ENCODE measurements at regions of chr3 and their contacts with region 1.

Region 1: GRCh38 chr3:45938864-45939263 is 4.4 kb upstream of the CXCR6 start:
- DNase-seq: peak; percentile 82
- H3K4me3 Mint-ChIP-seq: no peak overlapping the region
- H3K27ac Mint-ChIP-seq: no peak overlapping the region
- H3K4me1 Mint-ChIP-seq: peaks cover 6% of the 10 kb centered on the region
- H3K27me3 Mint-ChIP-seq: no peaks in the 10 kb centered on the region
- CTCF ChIP-seq: peak; percentile 79

Region 2: GRCh38 chr3:45037734-45038455 is 901.0 kb before region 1 on chr3:
- CTCF ChIA-PET with region 1: interaction called, 3 read pairs
- POLR2A ChIA-PET with region 1: no interaction called
- intact Hi-C with region 1: loop called (anchors 5 kb)
- DNase-seq: peak; percentile 97
- H3K4me3 Mint-ChIP-seq: no peak overlapping the region
- H3K27ac Mint-ChIP-seq: no peak overlapping the region
- H3K4me1 Mint-ChIP-seq: peaks cover 4% of the 10 kb centered on the region
- H3K27me3 Mint-ChIP-seq: no peaks in the 10 kb centered on the region
- CTCF ChIP-seq: peak; percentile 82

Region 3: GRCh38 chr3:45950686-45951600 is 12.1 kb after region 1 on chr3:
- CTCF ChIA-PET with region 1: interaction called, 13 read pairs
- POLR2A ChIA-PET with region 1: interaction called, 4 read pairs
- intact Hi-C with region 1: no loop called
- DNase-seq: no peak
- H3K4me3 Mint-ChIP-seq: no peak overlapping the region
- H3K27ac Mint-ChIP-seq: no peak overlapping the region
- H3K4me1 Mint-ChIP-seq: no peaks in the 10 kb centered on the region
- H3K27me3 Mint-ChIP-seq: no peaks in the 10 kb centered on the region
- CTCF ChIP-seq: no peak

Region 4: GRCh38 chr3:45972534-45973402 is 33.9 kb after region 1 on chr3:
- CTCF ChIA-PET with region 1: interaction called, 35 read pairs
- POLR2A ChIA-PET with region 1: no interaction called
- intact Hi-C with region 1: no loop called
- DNase-seq: peak; percentile 89
- H3K4me3 Mint-ChIP-seq: no peak overlapping the region
- H3K27ac Mint-ChIP-seq: peak overlapping the region; percentile 75
- H3K4me1 Mint-ChIP-seq: peaks cover 10% of the 10 kb centered on the region
- H3K27me3 Mint-ChIP-seq: no peaks in the 10 kb centered on the region
- CTCF ChIP-seq: no peak

Region 5: DNA sequence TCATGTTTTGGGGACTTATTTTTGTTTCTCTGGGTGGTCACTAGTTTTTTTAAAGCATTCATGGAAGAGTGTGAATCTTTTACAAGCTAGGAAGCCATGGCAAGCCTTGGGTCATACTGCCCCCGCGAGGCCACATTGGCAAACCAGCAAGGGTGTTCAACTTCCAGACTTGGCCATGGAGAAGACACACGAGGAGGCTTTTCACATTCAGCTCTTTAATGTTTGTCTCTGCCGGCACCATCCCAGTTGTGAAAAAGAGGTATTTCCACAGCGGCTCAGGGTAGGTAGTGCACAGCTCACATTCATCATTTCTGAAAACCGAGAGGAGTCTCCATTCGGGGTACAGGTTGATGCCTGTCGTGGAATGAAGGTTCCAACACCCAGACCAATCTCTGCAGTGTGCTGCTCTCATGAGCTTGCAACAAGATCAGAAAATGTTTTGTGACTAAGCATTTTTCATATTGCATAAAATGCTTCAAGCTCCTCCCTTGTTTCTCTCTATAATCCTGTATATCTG is 439.6 kb after region 1 on chr3:
- CTCF ChIA-PET with region 1: interaction called, 33 read pairs
- POLR2A ChIA-PET with region 1: interaction called, 6 read pairs
- intact Hi-C with region 1: loop called (anchors 2 kb)
- DNase-seq: peak; percentile 73
- H3K4me3 Mint-ChIP-seq: no peak overlapping the region
- H3K27ac Mint-ChIP-seq: peak overlapping the region; percentile 4
- H3K4me1 Mint-ChIP-seq: peaks cover 16% of the 10 kb centered on the region
- H3K27me3 Mint-ChIP-seq: peaks cover 33% of the 10 kb centered on the region
- CTCF ChIP-seq: peak; percentile 73

Region 6: DNA sequence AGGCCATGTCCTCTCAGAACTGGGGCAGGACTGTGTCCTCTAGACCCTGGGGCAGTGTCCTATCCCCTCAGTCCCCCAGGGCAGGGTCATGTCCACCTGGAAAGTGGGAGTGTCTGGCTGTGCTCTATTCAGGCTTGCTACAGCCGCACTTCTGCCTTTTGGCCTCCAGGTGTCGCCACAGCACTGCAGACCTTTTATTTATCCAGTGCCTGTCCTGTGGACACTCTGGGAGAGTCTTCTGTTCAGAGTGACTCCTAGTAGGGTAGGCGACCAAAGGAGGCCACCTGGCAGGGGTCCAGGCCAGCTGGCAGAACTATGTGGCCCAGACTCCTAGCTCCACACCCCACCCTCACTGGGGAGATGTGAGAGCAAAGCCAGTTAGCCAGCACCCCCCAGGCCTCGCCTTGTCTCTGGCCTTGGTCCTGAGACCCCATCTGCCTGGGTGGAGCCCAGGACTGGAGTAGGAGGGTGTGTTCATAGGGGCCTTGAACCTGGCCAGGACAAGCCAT is 766.2 kb after region 1 on chr3:
- CTCF ChIA-PET with region 1: no interaction called
- POLR2A ChIA-PET with region 1: no interaction called
- intact Hi-C with region 1: no loop called
- DNase-seq: peak; percentile 75
- H3K4me3 Mint-ChIP-seq: no peak overlapping the region
- H3K27ac Mint-ChIP-seq: no peak overlapping the region
- H3K4me1 Mint-ChIP-seq: peaks cover 6% of the 10 kb centered on the region
- H3K27me3 Mint-ChIP-seq: no peaks in the 10 kb centered on the region
- CTCF ChIP-seq: peak; percentile 97